HepG2 (cell line): ENCODE measurements at regions of chr4 and their contacts with region 1.

Region 1: DNA sequence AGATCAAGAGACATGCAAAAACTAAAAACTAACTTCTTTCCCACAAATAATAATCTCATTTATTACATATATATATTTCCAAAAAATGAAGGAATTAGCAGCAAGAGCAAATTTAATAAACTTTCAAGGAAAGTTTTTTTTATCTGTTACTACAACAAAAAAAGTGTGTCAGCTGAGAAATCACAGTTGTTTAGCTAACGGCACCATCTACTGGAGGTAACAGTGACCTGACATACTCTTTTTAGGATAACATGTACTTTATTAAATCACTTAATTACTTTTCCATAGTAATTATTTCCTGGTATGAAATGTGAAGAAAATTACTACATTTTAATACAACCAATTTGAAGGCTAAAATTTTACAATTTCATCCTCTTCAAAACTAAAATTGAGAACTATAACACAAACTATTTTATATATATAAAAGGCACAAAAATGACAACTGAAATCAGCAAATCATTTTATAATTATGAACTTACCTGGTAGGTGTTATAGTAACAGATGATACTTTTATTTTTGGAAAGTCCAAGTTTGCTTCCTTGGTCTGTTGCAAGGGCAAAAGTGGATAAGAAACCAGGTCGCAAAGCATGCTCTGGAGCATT is 9.1 kb downstream of the LAMTOR3 start:
- DNase-seq: peak; percentile 21
- ATAC-seq: no peak
- H3K4me3 ChIP-seq: no peak overlapping the region
- H3K27ac ChIP-seq: no peak overlapping the region
- H3K4me1 ChIP-seq: no peaks in the 10 kb centered on the region
- H3K27me3 ChIP-seq: no peaks in the 10 kb centered on the region
- CTCF ChIP-seq: peak; percentile 45
- EP300 ChIP-seq: no peak
- POLR2A ChIP-seq: no peak
- RAD21 ChIP-seq: no peak

Region 2: DNA sequence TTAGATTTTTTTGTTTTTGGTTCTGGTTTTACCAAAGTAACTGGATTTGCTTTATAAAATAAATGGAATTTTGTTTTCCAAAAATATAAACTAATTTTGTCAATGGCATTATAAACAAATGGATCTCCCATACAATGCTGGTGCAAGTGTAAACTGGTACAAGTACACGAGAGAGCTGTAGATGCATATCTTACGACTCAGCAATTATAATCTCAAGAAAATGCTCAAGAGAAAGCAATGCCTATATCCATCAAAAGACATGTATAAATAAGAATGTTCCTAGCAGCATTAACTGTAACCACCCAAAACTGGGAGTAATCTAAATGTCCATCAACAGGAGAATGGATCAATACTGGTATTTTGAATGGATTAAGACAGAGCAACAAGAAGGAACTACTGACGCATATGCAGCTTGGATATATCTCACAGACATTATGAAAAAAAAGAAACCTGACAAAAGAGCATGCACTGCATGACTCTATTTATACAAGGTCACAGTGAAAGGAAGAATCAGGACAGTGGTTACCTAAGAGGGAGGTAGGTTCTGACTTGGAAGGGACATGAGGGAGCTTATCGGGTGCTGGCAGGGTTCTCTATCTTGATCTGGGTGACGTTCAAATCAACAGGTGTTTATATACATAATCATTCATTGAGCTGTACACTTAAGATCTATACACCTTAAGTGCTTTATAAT is 806.1 kb before region 1 on chr4:
- CTCF ChIA-PET with region 1: no interaction called
- POLR2A ChIA-PET with region 1: no interaction called
- in situ Hi-C with region 1: no loop called
- intact Hi-C with region 1: loop called (anchors 5 kb)
- DNase-seq: no peak
- ATAC-seq: no peak
- H3K4me3 ChIP-seq: no peak overlapping the region
- H3K27ac ChIP-seq: no peak overlapping the region
- H3K4me1 ChIP-seq: peaks cover 69% of the 10 kb centered on the region
- H3K27me3 ChIP-seq: no peaks in the 10 kb centered on the region
- CTCF ChIP-seq: no peak
- EP300 ChIP-seq: no peak
- POLR2A ChIP-seq: no peak
- RAD21 ChIP-seq: no peak

Region 3: GRCh38 chr4:99134586-99134985 is 750.6 kb before region 1 on chr4:
- CTCF ChIA-PET with region 1: no interaction called
- POLR2A ChIA-PET with region 1: no interaction called
- in situ Hi-C with region 1: no loop called
- intact Hi-C with region 1: no loop called
- DNase-seq: no peak
- ATAC-seq: no peak
- H3K4me3 ChIP-seq: no peak overlapping the region
- H3K27ac ChIP-seq: no peak overlapping the region
- H3K4me1 ChIP-seq: no peaks in the 10 kb centered on the region
- H3K27me3 ChIP-seq: no peaks in the 10 kb centered on the region
- CTCF ChIP-seq: no peak
- EP300 ChIP-seq: no peak
- POLR2A ChIP-seq: no peak
- RAD21 ChIP-seq: no peak

Region 4: GRCh38 chr4:99808260-99808857 is 76.8 kb before region 1 on chr4:
- CTCF ChIA-PET with region 1: no interaction called
- POLR2A ChIA-PET with region 1: no interaction called
- in situ Hi-C with region 1: no loop called
- intact Hi-C with region 1: loop called (anchors 1 kb)
- DNase-seq: peak; percentile 49
- ATAC-seq: peak; percentile 96
- H3K4me3 ChIP-seq: no peak overlapping the region
- H3K27ac ChIP-seq: no peak overlapping the region
- H3K4me1 ChIP-seq: no peaks in the 10 kb centered on the region
- H3K27me3 ChIP-seq: no peaks in the 10 kb centered on the region; a peak in 1 of 5 replicates
- CTCF ChIP-seq: peak; percentile 89
- EP300 ChIP-seq: no peak
- POLR2A ChIP-seq: no peak
- RAD21 ChIP-seq: peak; percentile 73